CD8-positive, alpha-beta memory T cell (primary cell): ENCODE measurements at regions of chr16 and their contacts with region 1.

Region 1: DNA sequence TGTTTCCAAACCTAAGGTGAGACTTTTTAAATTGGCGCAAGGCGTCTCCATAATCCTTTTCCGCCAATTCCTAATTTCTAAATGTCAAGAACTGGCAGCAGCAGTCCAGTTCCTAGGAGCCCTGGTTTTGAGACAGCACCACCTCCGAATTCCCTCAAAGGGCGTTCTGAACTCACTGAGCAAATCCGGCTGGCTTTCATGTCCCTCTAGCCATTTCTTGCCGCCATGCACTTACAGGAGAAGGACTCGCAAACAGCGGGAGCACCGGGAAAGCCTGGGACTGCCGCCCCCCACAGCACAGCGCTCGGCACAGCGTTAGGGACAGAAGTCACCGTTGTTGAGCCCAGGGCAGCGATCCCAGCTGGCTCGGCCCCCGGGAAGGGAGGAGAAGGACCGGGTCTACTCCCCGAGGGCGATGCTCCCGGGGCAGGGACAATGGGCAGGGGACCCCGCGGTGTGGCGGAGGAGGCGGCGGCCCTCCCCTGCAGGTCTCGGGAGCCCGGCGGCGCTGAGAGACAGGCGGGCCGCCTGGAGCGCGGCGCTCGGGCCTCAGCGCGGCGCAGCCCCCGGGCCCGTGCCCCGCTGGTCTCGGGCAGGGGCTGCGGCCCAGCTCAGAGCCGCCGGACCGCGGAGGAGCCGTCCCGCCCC is 545 bp downstream of the ARHGAP17 start:
- DNase-seq: peak; percentile 10 to 49 (median 14)
- H3K4me3 ChIP-seq: peak overlapping the region; percentile 83
- H3K4me3 Mint-ChIP-seq: peak overlapping the region; percentile 85 to 98 (median 97)
- H3K27ac ChIP-seq: peak overlapping the region; percentile 70
- H3K27ac Mint-ChIP-seq: peak overlapping the region; percentile 87 to 99 (median 97)
- H3K4me1 ChIP-seq: peaks cover 63% of the 10 kb centered on the region
- H3K4me1 Mint-ChIP-seq: peaks cover 71 to 87% (median 79%) of the 10 kb centered on the region in 3 donors
- H3K27me3 ChIP-seq: no peaks in the 10 kb centered on the region
- H3K27me3 Mint-ChIP-seq: no peaks in the 10 kb centered on the region

Region 2: DNA sequence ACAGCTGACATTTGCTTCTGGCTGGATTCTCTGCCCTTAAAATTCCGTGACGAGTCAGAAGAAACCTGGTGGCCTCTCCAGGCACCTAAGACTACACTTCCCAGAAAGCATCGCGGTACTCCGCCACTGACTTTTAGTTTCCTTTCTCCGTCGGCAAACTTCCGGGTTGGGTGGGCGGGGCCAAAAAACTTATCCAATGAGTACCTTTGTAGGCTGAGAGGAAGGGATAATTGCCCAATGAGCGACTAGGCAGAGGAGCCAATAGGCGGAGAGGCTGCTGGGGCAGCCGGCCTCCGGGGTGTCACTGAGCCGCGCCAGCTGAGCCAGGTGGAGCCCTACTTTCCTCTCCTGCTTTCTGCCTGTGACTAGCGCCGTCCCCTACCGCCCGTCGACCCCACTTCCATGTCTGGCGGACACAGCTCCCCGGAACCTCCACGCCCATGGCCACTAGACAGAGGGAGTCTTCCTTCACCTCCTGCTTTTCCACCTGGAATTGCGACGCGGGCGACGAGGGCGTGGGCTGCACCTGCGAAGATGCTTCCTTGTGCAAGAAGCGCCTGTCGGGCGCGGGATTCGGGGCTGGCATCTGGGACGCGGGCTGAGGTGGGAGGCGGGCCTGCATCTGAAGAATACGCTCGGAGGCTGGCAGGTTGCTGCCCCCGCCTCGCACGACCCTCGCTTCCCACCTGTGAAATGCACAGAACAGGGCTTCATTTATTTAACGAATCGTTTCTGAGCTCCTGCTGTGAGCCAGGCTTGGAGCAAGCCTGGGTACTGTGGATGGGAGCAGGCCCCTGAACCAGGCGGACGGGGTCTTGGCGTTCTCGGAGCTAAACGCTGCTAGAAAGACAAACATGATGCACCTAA is 17.1 kb after region 1 on chr16:
- CTCF ChIA-PET with region 1: interaction called, 12 read pairs
- POLR2A ChIA-PET with region 1: interaction called, 23 read pairs
- DNase-seq: peak; percentile 88 to 94 (median 92)
- H3K4me3 ChIP-seq: peak overlapping the region; percentile 89
- H3K4me3 Mint-ChIP-seq: peak overlapping the region; percentile 79 to 99 (median 94)
- H3K27ac ChIP-seq: peak overlapping the region; percentile 64
- H3K27ac Mint-ChIP-seq: peak overlapping the region; percentile 61 to 96 (median 94)
- H3K4me1 ChIP-seq: peaks cover 24% of the 10 kb centered on the region
- H3K4me1 Mint-ChIP-seq: peaks cover 19 to 51% (median 37%) of the 10 kb centered on the region in 3 donors
- H3K27me3 ChIP-seq: no peaks in the 10 kb centered on the region
- H3K27me3 Mint-ChIP-seq: peaks cover 0 to 2% of the 10 kb centered on the region in 2 donors

Region 3: DNA sequence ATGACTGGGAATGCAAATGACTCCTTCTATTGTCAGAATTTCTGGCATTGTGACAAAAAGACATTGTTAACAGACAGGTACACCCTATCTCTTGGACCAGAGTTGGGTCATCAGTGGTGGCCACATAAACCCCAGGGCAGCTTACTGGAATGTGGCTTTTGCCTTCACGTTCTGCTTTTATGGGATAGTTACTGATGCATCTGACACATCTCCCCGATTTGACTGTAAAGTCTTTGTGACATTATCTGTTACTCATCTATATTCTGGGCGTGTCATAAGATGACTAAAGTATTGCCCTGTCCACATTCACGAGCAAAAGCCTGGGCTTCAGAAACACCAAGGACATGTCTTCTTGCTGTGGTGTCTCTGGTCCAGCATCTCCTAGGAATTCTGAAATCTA is 183.4 kb after region 1 on chr16:
- CTCF ChIA-PET with region 1: no interaction called
- POLR2A ChIA-PET with region 1: no interaction called
- DNase-seq: no peak
- H3K4me3 ChIP-seq: no peak overlapping the region
- H3K4me3 Mint-ChIP-seq: no peak overlapping the region
- H3K27ac ChIP-seq: no peak overlapping the region
- H3K27ac Mint-ChIP-seq: no peak overlapping the region
- H3K4me1 ChIP-seq: no peaks in the 10 kb centered on the region
- H3K4me1 Mint-ChIP-seq: no peaks in the 10 kb centered on the region
- H3K27me3 ChIP-seq: no peaks in the 10 kb centered on the region
- H3K27me3 Mint-ChIP-seq: no peaks in the 10 kb centered on the region